CD8-positive, alpha-beta memory T cell (primary cell): ENCODE measurements at regions of chr7 and their contacts with region 1.

Region 1: DNA sequence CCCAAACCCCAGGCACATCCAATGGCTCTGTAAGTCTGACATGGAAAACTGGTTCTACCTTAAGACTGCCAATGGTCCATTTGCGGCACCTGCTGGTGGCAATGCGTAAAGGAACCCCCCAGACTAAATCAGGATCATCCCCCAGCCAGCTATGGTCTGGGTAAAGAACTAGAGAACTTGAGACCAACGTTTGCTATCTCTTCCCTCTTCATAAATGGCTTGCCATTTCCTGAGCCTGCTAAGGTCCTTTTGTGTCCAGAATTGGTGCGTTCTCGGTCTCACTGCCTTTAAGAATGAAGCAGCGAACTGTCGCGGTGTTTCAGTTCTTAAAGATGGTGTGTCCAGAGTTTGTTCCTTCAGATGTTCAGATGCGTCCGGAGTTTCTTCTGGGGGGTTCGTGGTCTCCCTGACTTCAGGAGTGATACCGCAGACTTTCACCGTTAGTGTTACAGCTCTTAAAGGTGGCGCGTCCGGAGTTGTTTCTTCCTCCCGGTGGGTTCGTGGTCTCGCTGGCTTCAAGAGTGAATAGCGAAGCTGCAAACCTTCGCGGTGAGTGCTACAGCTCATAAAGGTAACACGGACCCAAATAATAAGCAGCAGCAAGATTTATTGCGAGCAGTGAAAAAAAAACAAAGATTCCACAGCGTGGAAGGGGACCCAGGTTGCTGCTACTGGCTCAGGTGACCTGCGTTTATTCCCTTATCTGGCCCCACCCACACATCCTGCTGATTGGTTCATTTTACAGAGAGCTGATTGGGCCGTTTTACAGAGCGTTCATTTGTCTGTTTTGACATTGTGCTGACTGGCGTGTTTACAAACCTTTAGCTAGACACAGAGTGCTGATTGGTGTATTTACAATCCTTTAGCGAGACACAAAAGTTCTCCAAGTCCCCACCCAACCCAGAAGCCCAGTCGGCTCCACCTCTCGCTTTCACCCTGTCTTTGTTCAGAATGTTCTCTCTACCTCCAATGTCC is 95.4 kb downstream of the ELMO1 start:
- DNase-seq: peak; percentile 49 to 81 (median 75)
- H3K4me3 ChIP-seq: peak overlapping the region; percentile 61
- H3K4me3 Mint-ChIP-seq: peak overlapping the region; percentile 88 to 96 (median 92)
- H3K27ac ChIP-seq: peak overlapping the region; percentile 41
- H3K27ac Mint-ChIP-seq: peak overlapping the region; percentile 73 to 95 (median 91)
- H3K4me1 ChIP-seq: peaks cover 46% of the 10 kb centered on the region
- H3K4me1 Mint-ChIP-seq: peaks cover 51 to 80% (median 70%) of the 10 kb centered on the region in 3 donors
- H3K27me3 ChIP-seq: no peaks in the 10 kb centered on the region
- H3K27me3 Mint-ChIP-seq: no peaks in the 10 kb centered on the region

Region 2: DNA sequence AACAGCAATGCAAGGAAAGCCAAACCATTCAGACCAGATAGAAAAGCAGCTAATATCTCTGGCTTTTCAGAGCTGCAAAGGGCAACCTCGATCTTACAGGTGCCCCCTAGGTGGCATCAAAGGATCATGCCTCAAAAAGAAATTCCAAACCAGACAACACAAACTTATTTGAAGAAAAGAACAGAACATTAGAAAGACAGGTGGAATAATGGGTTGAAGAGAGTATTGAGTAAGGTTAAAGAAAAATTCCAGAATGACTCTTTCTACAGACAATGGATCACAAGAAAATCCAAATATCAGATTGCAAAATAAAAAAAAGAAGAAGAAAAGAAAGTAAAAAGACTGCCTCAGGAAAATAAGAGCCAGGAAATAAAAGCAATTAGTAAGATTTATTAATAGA is 118.3 kb before region 1 on chr7:
- CTCF ChIA-PET with region 1: interaction called, 17 read pairs
- POLR2A ChIA-PET with region 1: no interaction called
- DNase-seq: peak in 2 of 5 donors; percentile 5 to 21
- H3K4me3 ChIP-seq: no peak overlapping the region
- H3K4me3 Mint-ChIP-seq: no peak overlapping the region
- H3K27ac ChIP-seq: no peak overlapping the region
- H3K27ac Mint-ChIP-seq: peak overlapping the region in 2 of 8 donors; percentile 20 to 25
- H3K4me1 ChIP-seq: no peaks in the 10 kb centered on the region
- H3K4me1 Mint-ChIP-seq: peaks cover 12 to 21% (median 18%) of the 10 kb centered on the region in 3 donors
- H3K27me3 ChIP-seq: no peaks in the 10 kb centered on the region
- H3K27me3 Mint-ChIP-seq: no peaks in the 10 kb centered on the region

Region 3: GRCh38 chr7:37284805-37285231 is 68.4 kb before region 1 on chr7:
- CTCF ChIA-PET with region 1: interaction called, 25 read pairs
- POLR2A ChIA-PET with region 1: no interaction called
- DNase-seq: peak; percentile 13 to 56 (median 17)
- H3K4me3 ChIP-seq: no peak overlapping the region
- H3K4me3 Mint-ChIP-seq: no peak overlapping the region
- H3K27ac ChIP-seq: no peak overlapping the region
- H3K27ac Mint-ChIP-seq: peak overlapping the region in 7 of 8 donors; percentile 23 to 61 (median 40)
- H3K4me1 ChIP-seq: peaks cover 13% of the 10 kb centered on the region
- H3K4me1 Mint-ChIP-seq: peaks cover 39 to 60% (median 53%) of the 10 kb centered on the region in 3 donors
- H3K27me3 ChIP-seq: no peaks in the 10 kb centered on the region
- H3K27me3 Mint-ChIP-seq: peaks cover 0 to 3% of the 10 kb centered on the region in 2 donors

Region 4: GRCh38 chr7:37342688-37343471 is 10.4 kb before region 1 on chr7:
- CTCF ChIA-PET with region 1: interaction called, 15 read pairs
- POLR2A ChIA-PET with region 1: interaction called, 8 read pairs
- DNase-seq: peak; percentile 44 to 82 (median 70)
- H3K4me3 ChIP-seq: peak overlapping the region; percentile 79
- H3K4me3 Mint-ChIP-seq: peak overlapping the region; percentile 90 to 99 (median 95)
- H3K27ac ChIP-seq: peak overlapping the region; percentile 62
- H3K27ac Mint-ChIP-seq: peak overlapping the region; percentile 88 to 99 (median 97)
- H3K4me1 ChIP-seq: peaks cover 58% of the 10 kb centered on the region
- H3K4me1 Mint-ChIP-seq: peaks cover 55 to 84% (median 83%) of the 10 kb centered on the region in 3 donors
- H3K27me3 ChIP-seq: no peaks in the 10 kb centered on the region
- H3K27me3 Mint-ChIP-seq: no peaks in the 10 kb centered on the region

Region 5: DNA sequence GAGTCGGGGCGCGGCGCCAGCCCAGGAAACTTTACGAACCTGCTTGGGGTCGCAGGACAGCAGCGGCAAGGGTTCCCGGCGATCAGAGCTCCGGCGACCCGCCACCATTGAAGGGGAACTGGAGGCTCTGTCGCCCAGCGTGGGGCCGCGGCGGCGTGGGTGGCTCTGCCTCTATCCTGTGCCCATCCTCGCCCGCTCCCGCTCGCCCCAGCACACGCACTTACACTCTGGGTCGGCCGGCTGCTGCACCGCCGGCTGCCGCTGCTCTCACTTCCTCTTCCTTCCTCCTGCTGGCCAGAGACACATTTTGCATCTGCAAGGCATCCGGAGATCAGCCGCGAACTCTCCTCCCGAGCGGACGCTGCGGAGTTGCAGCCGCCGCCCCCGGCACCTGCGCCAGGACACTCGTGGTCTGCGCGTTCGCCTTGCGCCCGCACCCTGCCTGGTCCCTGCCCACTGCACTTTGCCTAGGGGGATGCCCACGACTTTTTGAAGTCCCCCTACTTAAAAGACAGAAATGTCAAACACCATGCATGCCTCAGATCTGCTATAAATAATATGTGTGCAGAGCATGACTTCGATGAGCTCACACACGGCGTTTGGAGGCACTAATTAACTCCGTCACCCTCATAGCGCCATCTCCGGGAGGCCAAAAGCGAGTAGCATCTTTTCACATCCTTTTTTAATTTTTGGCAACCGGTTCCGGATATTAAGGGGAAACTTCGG is 95.5 kb after region 1 on chr7 and contains the start of gene ELMO1:
- CTCF ChIA-PET with region 1: interaction called, 18 read pairs
- POLR2A ChIA-PET with region 1: interaction called, 21 read pairs
- DNase-seq: peak; percentile 61 to 88 (median 84)
- H3K4me3 ChIP-seq: peak within 1 kb of the TSS; percentile 65
- H3K4me3 Mint-ChIP-seq: peak within 1 kb of the TSS; percentile 92 to 99 (median 98)
- H3K27ac ChIP-seq: peak within 1 kb of the TSS; percentile 80
- H3K27ac Mint-ChIP-seq: peak within 1 kb of the TSS; percentile 96 to 100 (median 98)
- H3K4me1 ChIP-seq: peaks cover 31% of the 10 kb centered on the region
- H3K4me1 Mint-ChIP-seq: peaks cover 49 to 65% (median 50%) of the 10 kb centered on the region in 3 donors
- H3K27me3 ChIP-seq: no peaks in the 10 kb centered on the region
- H3K27me3 Mint-ChIP-seq: peaks cover 0 to 6% of the 10 kb centered on the region in 2 donors
- total RNA-seq, gene ELMO1: 66.2 to 74.4 TPM